HCT116 (cell line): ENCODE measurements at regions of chr15 and their contacts with region 1.

Region 1: GRCh38 chr15:78618490-78618934 is 2.3 kb downstream of the CHRNA3 start:
- DNase-seq: peak; percentile 73
- ATAC-seq: peak; percentile 93
- H3K4me3 ChIP-seq: no peak overlapping the region
- H3K27ac ChIP-seq: no peak overlapping the region
- H3K4me1 ChIP-seq: peaks cover 0 to 4% of the 10 kb centered on the region in 2 experiments; a peak in 1 of 4 replicates
- H3K27me3 ChIP-seq: no peaks in the 10 kb centered on the region
- CTCF ChIP-seq: peak; percentile 78 to 88 (median 81)
- POLR2A ChIP-seq: no peak
- RAD21 ChIP-seq: peak; percentile 82

Region 2: GRCh38 chr15:78709263-78709882 is 90.9 kb after region 1 on chr15:
- CTCF ChIA-PET with region 1: interaction called, 3 read pairs
- POLR2A ChIA-PET with region 1: no interaction called
- RAD21 ChIA-PET with region 1: no interaction called
- intact Hi-C with region 1: loop called (anchors 1 kb)
- DNase-seq: peak; percentile 36
- ATAC-seq: peak; percentile 99
- H3K4me3 ChIP-seq: peak overlapping the region in 1 of 2 experiments; percentile 20; a peak in 1 of 4 replicates
- H3K27ac ChIP-seq: no peak overlapping the region
- H3K4me1 ChIP-seq: peaks cover 2 to 9% of the 10 kb centered on the region in 2 experiments; a peak in 2 of 4 replicates
- H3K27me3 ChIP-seq: no peaks in the 10 kb centered on the region
- CTCF ChIP-seq: peak; percentile 85 to 92 (median 87)
- POLR2A ChIP-seq: no peak
- RAD21 ChIP-seq: peak; percentile 95

Region 3: GRCh38 chr15:78750566-78750965 is 132.1 kb after region 1 on chr15:
- CTCF ChIA-PET with region 1: interaction called, 5 read pairs
- POLR2A ChIA-PET with region 1: no interaction called
- RAD21 ChIA-PET with region 1: no interaction called
- intact Hi-C with region 1: loop called (anchors 1 kb)
- DNase-seq: no peak
- ATAC-seq: peak; percentile 24
- H3K4me3 ChIP-seq: peak overlapping the region in 1 of 2 experiments; percentile 30; a peak in 1 of 4 replicates
- H3K27ac ChIP-seq: no peak overlapping the region
- H3K4me1 ChIP-seq: peaks cover 0 to 6% of the 10 kb centered on the region in 2 experiments; a peak in 1 of 4 replicates
- H3K27me3 ChIP-seq: no peaks in the 10 kb centered on the region
- CTCF ChIP-seq: no peak
- POLR2A ChIP-seq: no peak
- RAD21 ChIP-seq: no peak